ENCODE measurements at regions of chr1 and their contacts with region 1.

Region 1: GRCh38 chr1:17287130-17287776 is 20.7 kb upstream of the PADI4 start:
- DNase-seq: peak; percentile 98
- ATAC-seq: peak; percentile 96
- H3K4me3 ChIP-seq: no peak overlapping the region
- H3K27ac ChIP-seq: peak overlapping the region; percentile 83
- H3K4me1 ChIP-seq: peaks cover 35% of the 10 kb centered on the region
- H3K27me3 ChIP-seq: no peaks in the 10 kb centered on the region
- CTCF ChIP-seq: no peak

Region 2: GRCh38 chr1:17319561-17320350 is 32.5 kb after region 1 on chr1:
- CTCF ChIA-PET with region 1: interaction called, 12 read pairs
- POLR2A ChIA-PET with region 1: no interaction called
- intact Hi-C with region 1: no loop called
- DNase-seq: no peak
- ATAC-seq: no peak
- H3K4me3 ChIP-seq: no peak overlapping the region
- H3K27ac ChIP-seq: no peak overlapping the region
- H3K4me1 ChIP-seq: no peaks in the 10 kb centered on the region
- H3K27me3 ChIP-seq: no peaks in the 10 kb centered on the region
- CTCF ChIP-seq: no peak

Region 3: DNA sequence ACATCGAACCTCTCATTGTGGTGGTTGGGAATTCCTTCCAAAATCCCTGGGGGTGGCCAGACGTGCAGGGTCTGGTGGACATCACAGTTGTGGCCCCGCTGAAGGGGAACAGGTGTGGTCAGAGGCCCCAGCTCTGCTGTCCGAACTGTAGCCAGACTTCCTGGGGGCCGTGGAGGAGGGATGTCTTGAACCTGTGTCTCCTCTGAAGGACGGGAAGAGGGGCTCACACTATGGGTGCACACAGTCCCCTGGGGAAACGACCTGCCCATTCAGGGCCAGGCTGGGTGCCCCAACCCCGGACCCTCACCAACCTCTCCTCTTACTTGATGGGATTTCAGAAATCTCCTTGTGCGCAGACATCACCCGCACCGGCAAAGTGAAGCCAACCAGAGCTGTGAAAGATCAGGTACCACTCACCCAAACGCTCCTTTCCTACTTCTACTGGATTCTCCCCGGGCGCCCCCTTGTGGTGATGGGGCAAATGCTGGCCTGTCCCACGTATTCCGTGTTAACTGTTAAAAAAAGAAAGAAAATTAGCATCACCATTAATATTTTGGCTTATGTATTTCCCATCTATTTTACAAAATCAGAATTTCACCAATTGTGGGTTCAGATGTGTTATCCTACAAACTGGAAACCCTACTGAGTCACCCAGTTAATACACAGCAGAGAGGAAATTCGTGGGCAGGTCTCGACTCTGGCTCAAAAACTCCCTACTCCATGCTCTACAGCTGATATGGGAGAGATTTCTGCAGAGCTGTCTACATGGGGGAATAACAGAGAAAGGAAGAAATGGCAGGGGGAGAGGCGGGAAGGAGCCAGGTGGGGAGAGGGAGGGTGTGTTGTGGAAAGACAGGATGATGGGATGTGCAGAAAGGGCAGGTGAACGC is 48.8 kb after region 1 on chr1:
- CTCF ChIA-PET with region 1: no interaction called
- POLR2A ChIA-PET with region 1: no interaction called
- intact Hi-C with region 1: loop called (anchors 5 kb)
- DNase-seq: peak; percentile 79
- ATAC-seq: peak; percentile 94
- H3K4me3 ChIP-seq: no peak overlapping the region
- H3K27ac ChIP-seq: no peak overlapping the region
- H3K4me1 ChIP-seq: peaks cover 4% of the 10 kb centered on the region; the same call in 1 of the 2 replicates
- H3K27me3 ChIP-seq: no peaks in the 10 kb centered on the region
- CTCF ChIP-seq: peak; percentile 95

Region 4: GRCh38 chr1:17346041-17346799 is 59.0 kb after region 1 on chr1:
- CTCF ChIA-PET with region 1: no interaction called
- POLR2A ChIA-PET with region 1: no interaction called
- intact Hi-C with region 1: no loop called
- DNase-seq: no peak
- ATAC-seq: no peak
- H3K4me3 ChIP-seq: no peak overlapping the region
- H3K27ac ChIP-seq: no peak overlapping the region
- H3K4me1 ChIP-seq: peaks cover 20% of the 10 kb centered on the region
- H3K27me3 ChIP-seq: no peaks in the 10 kb centered on the region
- CTCF ChIP-seq: no peak

Region 5: GRCh38 chr1:17648457-17649145 is 361.3 kb after region 1 on chr1:
- CTCF ChIA-PET with region 1: no interaction called
- POLR2A ChIA-PET with region 1: no interaction called
- intact Hi-C with region 1: no loop called
- DNase-seq: no peak
- ATAC-seq: no peak
- H3K4me3 ChIP-seq: no peak overlapping the region
- H3K27ac ChIP-seq: no peak overlapping the region
- H3K4me1 ChIP-seq: no peaks in the 10 kb centered on the region
- H3K27me3 ChIP-seq: no peaks in the 10 kb centered on the region
- CTCF ChIP-seq: no peak

Measured in PC-3 (cell line).